ENCODE measurements at regions of chr6 and their contacts with region 1.

Region 1: DNA sequence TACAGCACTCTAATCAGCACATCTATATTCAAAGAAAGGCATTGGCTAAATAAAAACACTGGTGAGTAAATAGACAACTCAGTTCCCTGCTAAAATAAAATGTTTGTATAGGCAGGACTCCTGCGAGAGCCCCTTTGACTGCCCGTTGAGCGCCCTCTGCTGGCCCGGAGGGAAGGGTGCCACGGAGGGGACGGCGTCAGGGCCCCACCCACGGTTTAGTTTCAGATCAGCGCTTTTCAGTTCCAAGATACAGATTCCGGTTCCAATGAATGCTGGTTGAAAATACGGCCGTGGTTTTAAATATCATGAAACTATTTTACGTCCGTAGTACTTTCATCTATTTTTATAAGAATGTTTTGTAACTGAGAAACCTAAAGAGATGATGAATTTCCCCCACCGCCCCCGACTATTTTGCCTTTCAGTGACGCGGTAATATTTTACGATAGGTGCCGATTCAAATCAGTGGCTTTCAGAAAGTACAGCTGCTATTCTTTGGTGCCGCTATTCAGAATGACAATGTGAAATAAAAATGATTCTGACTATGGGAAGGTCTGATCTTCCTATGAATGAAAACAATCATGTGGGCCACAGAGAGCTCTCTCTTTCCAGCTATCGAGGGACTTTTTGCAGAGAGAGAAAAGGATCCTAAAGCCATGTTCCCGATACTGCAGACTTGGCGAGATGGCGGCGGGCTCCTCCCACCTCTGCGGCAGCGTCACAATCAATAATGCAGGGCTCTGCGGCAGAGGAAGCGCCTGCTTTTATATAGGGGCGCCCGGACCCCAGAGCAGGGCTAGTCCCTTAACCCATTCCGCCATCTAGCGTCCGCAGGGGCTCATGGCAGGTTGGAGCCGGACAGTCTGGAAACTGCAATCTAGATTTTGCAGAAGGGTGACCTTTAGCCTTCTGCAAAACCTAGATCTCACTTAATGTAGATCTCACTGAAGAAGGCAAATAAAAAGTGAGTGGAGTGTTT is 10.6 kb upstream of the CCN6 start:
- DNase-seq: peak; percentile 53 to 68
- ATAC-seq: peak; percentile 86
- H3K4me3 ChIP-seq: peak overlapping the region; percentile 64 to 85 (median 67)
- H3K27ac ChIP-seq: peak overlapping the region; percentile 44 to 73 (median 66)
- H3K4me1 ChIP-seq: peaks cover 1 to 8% of the 10 kb centered on the region in 2 donors
- H3K27me3 ChIP-seq: no peaks in the 10 kb centered on the region
- CTCF ChIP-seq: peak; percentile 77 to 94 (median 87)
- POLR2A ChIP-seq: no peak

Region 2: DNA sequence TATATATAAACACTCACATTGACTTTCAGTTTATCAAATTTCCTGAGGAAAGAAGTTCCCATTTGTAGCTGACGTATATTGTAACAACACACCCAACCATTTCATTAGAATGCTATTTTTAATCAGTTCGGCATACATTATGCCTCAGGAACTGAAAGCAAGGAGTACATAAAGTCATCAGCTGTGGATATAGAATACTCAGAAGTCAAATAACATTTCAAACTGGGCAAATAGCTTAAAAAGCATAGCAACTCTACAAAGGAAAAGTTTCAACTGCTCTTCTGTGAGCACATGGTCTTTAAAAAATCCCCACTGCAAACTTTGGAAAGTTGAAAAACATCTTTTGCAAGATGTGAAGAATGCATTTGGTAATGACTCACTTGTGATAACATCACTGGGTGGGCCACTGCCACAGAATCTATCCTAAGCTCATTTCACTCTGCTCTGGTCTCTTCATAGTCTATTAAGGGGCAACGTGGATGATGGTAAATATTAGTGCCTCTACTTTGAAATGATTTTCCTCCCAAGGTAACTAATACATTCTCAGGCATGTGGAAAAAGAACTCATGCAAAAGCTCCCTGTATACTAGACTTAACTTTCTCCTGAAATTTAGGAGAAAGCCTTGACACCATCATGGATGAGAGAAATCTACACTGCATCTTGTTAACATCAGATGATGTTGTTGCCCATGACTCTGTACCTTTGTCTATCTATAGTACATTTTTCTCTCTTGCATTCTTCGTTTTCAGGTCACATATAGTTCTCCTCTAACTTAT is 219.3 kb before region 1 on chr6:
- in situ Hi-C with region 1: no loop called
- intact Hi-C with region 1: no loop called
- DNase-seq: no peak
- ATAC-seq: peak; percentile 64 to 68
- H3K4me3 ChIP-seq: no peak overlapping the region
- H3K27ac ChIP-seq: peak overlapping the region; percentile 19 to 61 (median 44)
- H3K4me1 ChIP-seq: peaks cover 0 to 1% of the 10 kb centered on the region in 2 donors
- H3K27me3 ChIP-seq: no peaks in the 10 kb centered on the region
- CTCF ChIP-seq: no peak
- POLR2A ChIP-seq: no peak

Region 3: DNA sequence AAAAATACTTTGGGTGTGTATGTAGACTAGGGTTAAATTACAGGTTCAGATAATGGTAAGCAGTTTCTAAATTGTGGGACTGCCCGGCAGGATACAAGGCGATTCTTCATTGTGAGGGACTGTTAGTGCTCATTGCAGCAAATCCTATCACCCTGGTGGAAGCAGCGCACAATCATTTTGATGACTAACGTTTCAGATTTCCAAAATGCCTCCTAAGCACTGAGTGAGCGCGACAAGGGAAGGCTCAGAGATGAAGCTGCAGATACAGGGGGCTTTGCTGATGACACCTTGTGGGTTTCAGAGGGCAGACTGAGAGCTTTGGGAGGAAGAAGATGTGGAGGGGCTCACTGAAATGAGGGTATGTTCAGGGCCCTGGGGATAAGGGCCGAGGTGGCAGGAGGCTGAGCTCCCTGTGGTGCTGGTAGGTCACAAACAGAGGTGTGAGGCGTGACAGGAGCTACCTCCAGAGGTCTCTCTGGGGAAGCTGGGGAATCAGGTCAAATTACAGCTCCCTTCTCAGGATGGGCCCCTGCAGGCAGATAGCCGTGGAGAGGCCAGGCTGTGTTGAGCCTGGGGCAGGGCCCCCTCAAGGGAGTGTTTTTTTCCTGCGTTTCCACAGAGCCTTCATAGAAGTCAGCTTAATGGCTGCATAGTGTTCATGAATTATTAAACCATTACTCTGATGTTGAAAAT is 85.6 kb before region 1 on chr6:
- in situ Hi-C with region 1: no loop called
- intact Hi-C with region 1: no loop called
- DNase-seq: no peak
- ATAC-seq: no peak
- H3K4me3 ChIP-seq: no peak overlapping the region
- H3K27ac ChIP-seq: no peak overlapping the region
- H3K4me1 ChIP-seq: no peaks in the 10 kb centered on the region
- H3K27me3 ChIP-seq: peaks cover 0 to 5% (median 4%) of the 10 kb centered on the region in 3 donors
- CTCF ChIP-seq: no peak
- POLR2A ChIP-seq: no peak

Region 4: GRCh38 chr6:111997078-111997852 is 46.1 kb before region 1 on chr6:
- in situ Hi-C with region 1: no loop called
- intact Hi-C with region 1: loop called (anchors 2 kb)
- DNase-seq: peak; percentile 76 to 79
- ATAC-seq: peak; percentile 70 to 92
- H3K4me3 ChIP-seq: peak overlapping the region; percentile 8 to 39 (median 34)
- H3K27ac ChIP-seq: peak overlapping the region; percentile 21 to 64 (median 54)
- H3K4me1 ChIP-seq: peaks cover 0 to 8% of the 10 kb centered on the region in 2 donors
- H3K27me3 ChIP-seq: no peaks in the 10 kb centered on the region
- CTCF ChIP-seq: peak; percentile 84 to 93 (median 89)
- POLR2A ChIP-seq: no peak

Measured in gastrocnemius medialis (tissue), 4 donors.